OCI-LY7 (cell line): ENCODE measurements at regions of chr18 and their contacts with region 1.

Region 1: DNA sequence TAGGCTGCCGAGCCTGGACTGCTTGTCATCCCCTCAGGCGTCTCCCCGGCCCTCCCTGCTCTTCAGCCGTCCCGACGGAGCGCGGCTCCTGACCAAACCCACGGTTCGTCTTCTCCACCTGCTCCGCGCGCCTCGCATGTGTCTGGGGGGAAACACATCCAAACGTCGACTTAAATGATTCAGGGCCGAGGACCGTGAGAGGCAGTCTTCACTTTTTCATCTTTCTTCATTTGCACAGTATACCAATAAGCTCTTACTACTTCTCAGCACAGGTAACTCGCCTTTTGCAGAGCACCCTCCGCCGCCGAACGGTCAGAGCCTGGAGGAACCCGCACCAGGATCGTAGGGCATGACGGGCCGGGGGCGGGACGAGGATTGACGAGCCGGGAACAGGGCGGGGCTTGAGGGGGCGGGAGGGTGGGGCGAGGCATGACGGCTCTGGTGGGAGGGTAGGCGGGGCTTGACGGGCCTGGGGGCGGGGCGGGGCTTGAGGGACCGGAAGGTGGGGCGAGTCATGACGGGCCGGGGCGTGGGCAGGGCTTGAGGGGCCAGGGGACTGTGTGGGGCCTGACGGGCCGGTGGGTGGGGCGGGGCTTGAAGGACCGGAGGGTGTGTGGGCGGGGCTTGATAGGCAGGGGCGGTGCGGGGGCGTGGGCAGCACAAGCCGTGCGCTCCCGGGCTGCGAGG is at the start of gene SEH1L:
- DNase-seq: peak; percentile 98
- H3K4me3 ChIP-seq: peak within 1 kb of the TSS; percentile 85
- H3K27ac ChIP-seq: peak within 1 kb of the TSS; percentile 97
- H3K4me1 ChIP-seq: peaks cover 37% of the 10 kb centered on the region
- CTCF ChIP-seq: no peak
- total RNA-seq, gene SEH1L: 61.6 and 74.6 TPM in 2 replicates

Region 2: GRCh38 chr18:12309683-12310198 is 637.8 kb before region 1 on chr18:
- CTCF ChIA-PET with region 1: no interaction called
- POLR2A ChIA-PET with region 1: interaction called, 4 read pairs
- intact Hi-C with region 1: loop called (anchors 5 kb)
- DNase-seq: no peak
- H3K4me3 ChIP-seq: no peak overlapping the region
- H3K27ac ChIP-seq: no peak overlapping the region
- H3K4me1 ChIP-seq: peaks cover 11% of the 10 kb centered on the region
- CTCF ChIP-seq: no peak

Region 3: GRCh38 chr18:12408247-12408869 is 539.1 kb before region 1 on chr18:
- CTCF ChIA-PET with region 1: no interaction called
- POLR2A ChIA-PET with region 1: no interaction called
- intact Hi-C with region 1: loop called (anchors 5 kb)
- DNase-seq: peak; percentile 57
- H3K4me3 ChIP-seq: peak overlapping the region; percentile 92
- H3K27ac ChIP-seq: peak overlapping the region; percentile 64
- H3K4me1 ChIP-seq: peaks cover 28% of the 10 kb centered on the region
- CTCF ChIP-seq: no peak

Region 4: GRCh38 chr18:12702221-12703095 is 245.0 kb before region 1 on chr18 and contains the starts of genes CEP76 and PSMG2:
- CTCF ChIA-PET with region 1: no interaction called
- POLR2A ChIA-PET with region 1: no interaction called
- intact Hi-C with region 1: loop called (anchors 1 kb)
- DNase-seq: peak; percentile 92
- H3K4me3 ChIP-seq: peak within 1 kb of the TSS; percentile 92
- H3K27ac ChIP-seq: peak within 1 kb of the TSS; percentile 79
- H3K4me1 ChIP-seq: peaks cover 34% of the 10 kb centered on the region
- CTCF ChIP-seq: no peak
- total RNA-seq, gene CEP76: 22.1 and 23.7 TPM in 2 replicates
- total RNA-seq, gene PSMG2: 61.7 and 69.2 TPM in 2 replicates

Region 5: DNA sequence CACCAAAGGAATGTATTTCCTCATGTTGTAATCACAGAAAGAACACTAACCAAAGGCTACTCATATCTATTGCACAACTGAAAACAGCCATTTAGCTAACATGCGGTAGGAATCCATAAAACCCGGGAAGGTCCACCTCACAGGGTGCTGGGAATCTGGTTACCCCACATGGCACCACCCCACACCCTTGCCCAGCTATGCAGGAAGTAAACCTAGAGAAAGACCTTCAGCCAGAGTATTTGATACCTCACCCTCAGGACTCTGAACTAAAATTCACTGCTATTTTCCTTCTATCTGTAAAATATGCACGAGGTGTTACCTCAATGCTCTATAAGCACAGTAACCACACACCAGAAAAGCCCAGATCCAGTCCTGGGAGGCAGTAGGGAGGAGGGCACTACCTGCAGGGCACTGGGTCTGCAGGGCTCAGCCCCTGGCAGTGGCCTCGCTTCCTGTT is 109.3 kb before region 1 on chr18:
- CTCF ChIA-PET with region 1: no interaction called
- POLR2A ChIA-PET with region 1: no interaction called
- intact Hi-C with region 1: loop called (anchors 5 kb)
- DNase-seq: peak; percentile 31
- H3K4me3 ChIP-seq: peak overlapping the region; percentile 46
- H3K27ac ChIP-seq: peak overlapping the region; percentile 18
- H3K4me1 ChIP-seq: peaks cover 39% of the 10 kb centered on the region
- CTCF ChIP-seq: no peak

Region 6: GRCh38 chr18:12883684-12884405 is 63.7 kb before region 1 on chr18 and contains the start of gene PTPN2:
- CTCF ChIA-PET with region 1: no interaction called
- POLR2A ChIA-PET with region 1: interaction called, 7 read pairs
- intact Hi-C with region 1: loop called (anchors 5 kb)
- DNase-seq: peak; percentile 95
- H3K4me3 ChIP-seq: peak within 1 kb of the TSS; percentile 78
- H3K27ac ChIP-seq: peak within 1 kb of the TSS; percentile 86
- H3K4me1 ChIP-seq: peaks cover 61% of the 10 kb centered on the region
- CTCF ChIP-seq: no peak
- total RNA-seq, gene PTPN2: 69.7 and 85.0 TPM in 2 replicates

Region 7: DNA sequence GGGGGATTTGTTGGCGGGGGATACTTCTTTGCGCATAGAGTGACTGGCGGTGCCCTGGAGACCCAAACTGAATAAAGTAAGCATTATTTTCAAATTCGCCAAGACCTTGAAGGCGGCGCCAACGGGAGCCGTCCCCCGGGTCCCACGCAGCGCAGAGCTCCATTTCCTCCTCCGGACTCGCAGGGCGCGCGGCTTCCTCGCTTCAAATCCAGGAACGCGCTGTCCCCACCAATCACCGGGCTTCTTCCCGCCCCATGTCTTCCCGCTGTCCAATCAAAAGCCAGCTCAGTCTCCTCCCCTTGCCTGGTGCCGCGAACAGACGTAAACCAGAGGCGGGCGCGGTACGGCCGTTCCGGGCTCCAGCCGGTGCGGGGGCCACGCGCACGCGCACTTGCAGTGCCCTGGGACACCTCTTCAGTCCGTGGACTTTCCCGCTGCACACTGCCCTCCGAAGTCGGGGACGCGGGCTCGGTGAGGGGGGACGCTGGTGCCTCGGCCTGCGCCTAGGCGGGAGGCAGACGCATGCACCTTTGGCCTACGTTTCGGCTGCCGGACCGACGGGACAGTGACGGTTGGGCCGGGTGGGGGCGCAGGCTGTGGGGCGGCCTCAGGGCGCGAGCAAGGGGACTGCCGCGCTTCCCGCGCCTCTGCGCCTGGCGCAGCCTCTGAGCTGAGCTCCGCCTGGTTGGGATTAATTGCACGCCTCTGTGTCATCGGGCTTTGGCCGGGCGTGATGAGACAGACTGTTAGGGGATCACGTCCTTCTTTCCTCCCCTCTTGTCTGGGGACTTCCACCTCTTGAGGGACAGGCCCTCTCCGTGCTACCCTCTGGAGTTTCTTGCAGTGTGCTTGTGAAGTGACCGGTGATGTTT is 43.7 kb after region 1 on chr18 and contains the start of gene CEP192:
- CTCF ChIA-PET with region 1: no interaction called
- POLR2A ChIA-PET with region 1: interaction called, 7 read pairs
- intact Hi-C with region 1: loop called (anchors 2 kb)
- DNase-seq: peak; percentile 98
- H3K4me3 ChIP-seq: peak within 1 kb of the TSS; percentile 78
- H3K27ac ChIP-seq: peak within 1 kb of the TSS; percentile 79
- H3K4me1 ChIP-seq: peaks cover 24% of the 10 kb centered on the region
- CTCF ChIP-seq: peak; percentile 44; the same call in 1 of the 2 replicates
- total RNA-seq, gene CEP192: 57.7 and 59.9 TPM in 2 replicates

Region 8: GRCh38 chr18:13268158-13269012 is 320.9 kb after region 1 on chr18:
- CTCF ChIA-PET with region 1: no interaction called
- POLR2A ChIA-PET with region 1: no interaction called
- intact Hi-C with region 1: no loop called
- DNase-seq: no peak
- H3K4me3 ChIP-seq: no peak overlapping the region
- H3K27ac ChIP-seq: no peak overlapping the region
- H3K4me1 ChIP-seq: no peaks in the 10 kb centered on the region
- CTCF ChIP-seq: no peak